AG04449 (cell line): ENCODE measurements at regions of chr7 and their contacts with region 1.

Region 1: GRCh38 chr7:14457568-14458453 is 444.7 kb downstream of the DGKB start:
- DNase-seq: peak; percentile 1
- H3K4me3 ChIP-seq: no peak overlapping the region
- CTCF ChIP-seq: peak; percentile 63

Region 2: DNA sequence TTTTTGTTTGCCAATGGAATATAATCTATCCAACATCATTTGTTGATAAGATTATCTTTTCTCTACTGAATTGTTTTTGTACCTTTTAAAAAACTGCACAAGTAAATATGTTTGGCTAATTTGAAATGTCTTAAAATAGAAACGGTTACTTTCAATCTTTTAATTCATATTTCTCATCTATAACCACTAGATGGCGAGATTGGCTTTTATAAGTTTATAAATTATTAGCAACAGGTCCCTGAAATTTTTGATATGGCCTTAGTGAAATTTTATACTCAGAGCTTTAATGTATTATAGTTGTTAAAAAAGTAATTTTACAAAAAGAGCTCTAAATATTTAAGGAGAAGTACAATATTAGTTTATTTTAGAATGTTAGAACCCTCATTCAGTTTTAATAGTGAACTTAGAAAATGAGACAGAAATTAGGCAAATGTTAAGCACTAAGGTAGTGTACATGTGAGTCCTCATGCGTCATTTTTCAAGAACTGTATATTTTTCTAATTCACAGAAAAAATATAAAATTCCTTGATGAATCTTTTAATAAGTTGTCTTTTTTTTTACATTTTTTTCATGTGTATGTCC is 1177.9 kb before region 1 on chr7:
- CTCF ChIA-PET with region 1: interaction called, 48 read pairs
- POLR2A ChIA-PET with region 1: no interaction called
- DNase-seq: no peak
- H3K4me3 ChIP-seq: no peak overlapping the region
- CTCF ChIP-seq: no peak

Region 3: GRCh38 chr7:13524076-13524475 is 933.7 kb before region 1 on chr7:
- CTCF ChIA-PET with region 1: interaction called, 22 read pairs
- POLR2A ChIA-PET with region 1: no interaction called
- DNase-seq: no peak
- H3K4me3 ChIP-seq: no peak overlapping the region
- CTCF ChIP-seq: no peak